A549 (cell line): ENCODE measurements at regions of chr13 and their contacts with region 1.

Region 1: GRCh38 chr13:19927117-19927748 is 31.3 kb upstream of the ZMYM2 start:
- DNase-seq: peak; percentile 34 to 40
- ATAC-seq: peak; percentile 43 to 53; a peak in 2 of 6 replicates
- H3K4me3 ChIP-seq: no peak overlapping the region
- H3K27ac ChIP-seq: no peak overlapping the region
- H3K4me1 ChIP-seq: no peaks in the 10 kb centered on the region
- CTCF ChIP-seq: peak; percentile 55
- EP300 ChIP-seq: no peak
- POLR2A ChIP-seq: no peak
- RAD21 ChIP-seq: peak; percentile 47 to 56; a peak in 4 of 5 replicates

Region 2: GRCh38 chr13:19940106-19940505 is 12.9 kb after region 1 on chr13:
- CTCF ChIA-PET with region 1: interaction called, 10 read pairs
- POLR2A ChIA-PET with region 1: no interaction called
- DNase-seq: no peak
- ATAC-seq: no peak
- H3K4me3 ChIP-seq: no peak overlapping the region
- H3K27ac ChIP-seq: no peak overlapping the region
- H3K4me1 ChIP-seq: no peaks in the 10 kb centered on the region
- CTCF ChIP-seq: no peak
- EP300 ChIP-seq: no peak
- POLR2A ChIP-seq: no peak
- RAD21 ChIP-seq: no peak

Region 3: DNA sequence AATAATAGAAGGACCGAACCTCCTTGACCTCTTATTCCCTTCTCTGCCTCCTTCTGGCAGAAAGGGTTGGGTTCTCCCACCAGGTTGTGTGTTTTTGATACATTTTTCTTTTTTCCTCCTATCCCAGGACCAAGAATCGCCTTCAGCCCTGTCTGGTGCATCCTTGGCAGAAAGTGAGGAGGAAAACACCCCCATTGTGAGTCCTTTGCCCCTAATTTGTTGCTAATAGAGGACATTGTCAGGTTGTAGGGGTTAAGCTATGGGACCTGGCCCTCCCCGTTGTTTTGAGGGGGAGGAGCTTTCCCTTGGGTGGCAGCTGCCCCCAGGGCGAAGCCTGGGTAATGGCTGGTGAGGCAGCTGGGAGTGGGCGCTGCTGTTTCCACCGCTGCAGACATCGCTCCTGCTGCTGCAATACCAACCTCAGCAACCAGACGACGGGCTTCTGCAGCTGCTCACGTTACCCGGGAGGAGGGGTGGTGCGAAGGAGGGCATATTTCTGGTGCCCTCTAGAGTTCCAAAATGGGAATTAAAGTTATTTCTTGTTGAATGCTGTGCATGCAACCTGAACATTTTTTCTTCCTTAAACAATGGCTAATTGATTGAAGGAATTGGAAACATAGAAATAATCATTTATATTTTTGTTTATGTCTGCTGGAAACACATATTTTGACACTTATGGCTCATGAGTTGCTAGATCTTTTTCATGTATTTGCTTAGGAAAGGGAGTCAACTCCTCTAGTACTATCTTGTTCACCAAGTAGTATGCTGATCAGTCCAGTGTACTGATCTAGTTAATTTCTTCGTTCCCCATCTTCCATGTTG is 32.8 kb after region 1 on chr13:
- CTCF ChIA-PET with region 1: interaction called, 14 read pairs
- POLR2A ChIA-PET with region 1: interaction called, 3 read pairs
- DNase-seq: peak; percentile 62 to 87
- ATAC-seq: peak; percentile 58 to 70
- H3K4me3 ChIP-seq: peak overlapping the region; percentile 96
- H3K27ac ChIP-seq: peak overlapping the region; percentile 98 to 99
- H3K4me1 ChIP-seq: peaks cover 22% of the 10 kb centered on the region; the same call in 2 of the 3 replicates
- CTCF ChIP-seq: peak; percentile 56
- EP300 ChIP-seq: no peak
- POLR2A ChIP-seq: no peak
- RAD21 ChIP-seq: peak; percentile 39 to 45; a peak in 4 of 5 replicates